Activated T-helper 1 cell treated with anti-CD3 and anti-CD28 coated beads, Interleukin-12 subunit alpha, Interleukin-12 subunit beta, Interleukin-2, Interleukin-4 antibody, amounts not matched to agents 30 ng/mL and 10 ng/mL and 1 ng/mL, durations not matched to agents 14 hours and 24 hours and 36 hours (primary cell): ENCODE measurements at regions of chr12 and their contacts with region 1.

Region 1: GRCh38 chr12:46382964-46383653 is 10.5 kb upstream of the SLC38A2 start:
- DNase-seq: peak; percentile 95
- H3K4me3 Mint-ChIP-seq: peak overlapping the region; percentile 84
- H3K27ac Mint-ChIP-seq: peak overlapping the region; percentile 92
- H3K4me1 Mint-ChIP-seq: peaks cover 54% of the 10 kb centered on the region
- H3K27me3 Mint-ChIP-seq: no peaks in the 10 kb centered on the region

Region 2: GRCh38 chr12:46404225-46404631 is 21.1 kb after region 1 on chr12:
- intact Hi-C with region 1: loop called (anchors 2 kb)
- DNase-seq: no peak
- H3K4me3 Mint-ChIP-seq: no peak overlapping the region
- H3K27ac Mint-ChIP-seq: no peak overlapping the region
- H3K4me1 Mint-ChIP-seq: peaks cover 78% of the 10 kb centered on the region
- H3K27me3 Mint-ChIP-seq: no peaks in the 10 kb centered on the region

Region 3: DNA sequence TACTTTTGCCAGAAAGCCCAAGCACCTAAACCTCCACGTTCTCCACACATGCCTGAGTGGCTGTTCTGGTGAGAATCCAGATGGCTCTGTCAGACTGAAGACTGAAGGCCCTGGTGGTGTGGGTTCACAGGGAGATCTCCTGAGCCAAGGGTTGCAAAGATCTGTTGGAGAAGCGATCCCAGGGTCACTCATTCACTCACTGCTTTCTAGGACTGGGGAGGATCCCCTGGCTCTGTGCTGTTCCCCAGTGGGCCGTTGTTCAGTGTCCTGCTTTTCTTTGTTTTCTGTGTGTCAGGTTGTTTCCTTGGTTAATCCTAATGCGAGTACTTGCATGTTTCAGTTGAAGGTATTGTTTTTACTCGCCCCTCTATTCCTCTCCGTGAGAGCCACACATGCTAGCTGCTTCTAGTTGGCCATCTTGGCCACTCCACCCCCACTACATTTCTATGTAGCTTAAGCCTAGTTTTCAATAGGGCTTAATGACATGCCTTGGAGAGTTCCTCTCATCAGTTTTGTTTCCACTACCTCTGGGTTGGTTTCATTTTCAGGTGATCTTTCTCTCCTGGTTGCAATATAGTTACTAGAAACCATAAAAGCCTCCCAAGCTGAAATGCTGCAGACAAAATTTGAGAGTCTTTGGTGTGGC is 133.9 kb after region 1 on chr12:
- intact Hi-C with region 1: loop called (anchors 1 kb)
- DNase-seq: no peak
- H3K4me3 Mint-ChIP-seq: peak overlapping the region; percentile 74
- H3K27ac Mint-ChIP-seq: peak overlapping the region; percentile 98
- H3K4me1 Mint-ChIP-seq: peaks cover 60% of the 10 kb centered on the region
- H3K27me3 Mint-ChIP-seq: no peaks in the 10 kb centered on the region

Region 4: DNA sequence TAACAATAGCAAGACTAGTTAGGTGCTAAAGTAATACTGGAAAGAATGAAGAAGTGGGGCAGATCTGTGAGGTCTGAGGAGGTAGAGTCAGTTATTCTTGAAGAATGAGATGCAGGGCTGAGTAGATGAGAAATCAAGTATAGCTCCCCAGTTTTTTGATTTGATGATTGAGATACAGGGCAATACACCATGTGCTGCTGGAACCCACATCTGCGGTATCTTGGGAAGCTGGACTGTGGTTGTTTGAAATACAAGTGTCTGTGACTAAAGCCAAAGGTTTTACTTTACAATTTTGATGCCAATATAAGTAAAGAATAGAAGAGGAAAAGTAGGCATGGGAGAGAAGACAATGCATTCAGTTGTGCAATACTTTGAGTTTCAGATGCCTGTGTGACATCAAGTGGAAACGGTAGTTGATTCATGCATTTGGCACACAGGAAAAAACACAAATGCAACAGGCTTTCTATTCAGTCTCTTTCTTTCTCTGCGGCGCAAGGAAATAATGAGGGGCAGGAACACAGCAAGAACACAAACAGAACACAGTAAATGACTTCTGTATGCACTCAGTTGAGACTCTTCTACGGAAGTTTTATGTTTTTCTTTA is 179.6 kb after region 1 on chr12:
- intact Hi-C with region 1: no loop called
- DNase-seq: no peak
- H3K4me3 Mint-ChIP-seq: no peak overlapping the region
- H3K27ac Mint-ChIP-seq: peak overlapping the region; percentile 60
- H3K4me1 Mint-ChIP-seq: peaks cover 14% of the 10 kb centered on the region
- H3K27me3 Mint-ChIP-seq: no peaks in the 10 kb centered on the region

Region 5: GRCh38 chr12:46608431-46609272 is 225.5 kb after region 1 on chr12:
- intact Hi-C with region 1: loop called (anchors 5 kb)
- DNase-seq: no peak
- H3K4me3 Mint-ChIP-seq: peak overlapping the region; percentile 71
- H3K27ac Mint-ChIP-seq: peak overlapping the region; percentile 42
- H3K4me1 Mint-ChIP-seq: peaks cover 29% of the 10 kb centered on the region
- H3K27me3 Mint-ChIP-seq: no peaks in the 10 kb centered on the region